Heart left ventricle (tissue), 16 donors: ENCODE measurements at regions of chr2 and their contacts with region 1.

Region 1: DNA sequence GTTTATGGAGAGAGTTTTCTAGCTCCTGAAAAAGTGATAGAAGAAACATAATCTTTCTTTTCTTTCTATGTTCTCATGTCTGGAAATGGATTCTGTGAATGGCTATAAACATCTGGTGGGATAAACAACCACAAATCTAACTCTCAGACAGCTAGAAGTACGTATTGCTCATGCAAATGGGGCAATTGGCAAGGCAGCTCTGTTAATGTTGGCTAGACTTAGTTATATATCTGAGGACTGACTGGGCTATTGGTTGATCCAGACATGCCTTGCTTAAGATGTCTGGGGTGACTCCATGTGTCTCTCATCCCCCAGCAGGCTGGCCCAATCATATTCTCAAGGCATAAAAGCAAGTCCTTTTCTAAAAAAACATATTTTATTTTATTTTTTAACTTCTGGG is 939.2 kb upstream of the NRXN1 start:
- DNase-seq: no peak
- ATAC-seq: no peak
- H3K4me3 ChIP-seq: no peak overlapping the region
- H3K27ac ChIP-seq: no peak overlapping the region
- H3K4me1 ChIP-seq: no peaks in the 10 kb centered on the region
- H3K27me3 ChIP-seq: no peaks in the 10 kb centered on the region
- CTCF ChIP-seq: no peak
- POLR2A ChIP-seq: no peak

Region 2: DNA sequence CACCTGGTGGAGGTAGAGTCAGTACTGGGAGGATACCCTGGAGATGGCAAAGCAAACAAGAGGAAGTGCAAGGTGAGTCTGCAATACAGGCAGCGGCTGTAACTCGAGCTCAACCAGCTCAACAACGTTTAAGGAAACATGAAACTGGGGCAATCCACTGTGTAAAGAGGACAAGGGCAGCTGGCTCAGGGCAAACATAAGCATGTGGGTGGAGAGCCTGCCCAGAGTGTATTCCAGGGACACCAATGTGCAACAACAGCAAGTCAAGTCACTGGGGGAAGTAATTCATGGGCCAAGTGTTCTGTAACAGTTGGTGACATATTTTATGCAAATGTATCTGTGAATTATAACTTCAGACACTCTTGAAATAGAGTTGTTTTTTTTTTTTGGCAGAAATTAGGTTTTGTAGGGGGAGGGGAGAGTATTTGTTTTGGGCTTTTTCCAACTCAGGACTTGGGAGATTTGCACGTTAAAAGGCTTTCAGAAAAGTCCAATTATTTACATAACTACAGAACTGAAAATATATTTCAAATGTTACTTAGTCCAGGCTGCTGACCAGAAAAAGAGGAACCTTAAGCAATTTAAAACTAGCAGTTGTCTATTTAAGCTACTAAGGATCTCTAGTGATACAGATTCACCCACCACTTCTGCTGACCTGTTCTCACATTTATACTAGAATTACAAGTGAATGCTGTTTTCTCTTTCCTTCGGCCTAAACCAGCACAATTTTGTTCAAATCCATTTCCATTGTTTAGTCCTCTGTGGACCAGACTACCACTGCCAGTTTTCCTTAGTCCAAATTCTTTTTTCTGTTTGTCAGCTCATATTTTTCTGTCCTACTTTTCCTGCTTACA is 957.8 kb before region 1 on chr2:
- intact Hi-C with region 1: loop called in 1 of 10 experiments (anchors 5 kb)
- DNase-seq: no peak
- ATAC-seq: peak in 1 of 4 donors; percentile 24
- H3K4me3 ChIP-seq: no peak overlapping the region
- H3K27ac ChIP-seq: no peak overlapping the region
- H3K4me1 ChIP-seq: peaks cover 0 to 11% (median 0%) of the 10 kb centered on the region in 12 donors
- H3K27me3 ChIP-seq: no peaks in the 10 kb centered on the region
- CTCF ChIP-seq: no peak
- POLR2A ChIP-seq: no peak

Region 3: GRCh38 chr2:51789918-51790317 is 181.2 kb before region 1 on chr2:
- intact Hi-C with region 1: no loop called
- DNase-seq: no peak
- ATAC-seq: no peak
- H3K4me3 ChIP-seq: no peak overlapping the region
- H3K27ac ChIP-seq: no peak overlapping the region
- H3K4me1 ChIP-seq: no peaks in the 10 kb centered on the region
- H3K27me3 ChIP-seq: no peaks in the 10 kb centered on the region
- CTCF ChIP-seq: no peak
- POLR2A ChIP-seq: no peak

Region 4: DNA sequence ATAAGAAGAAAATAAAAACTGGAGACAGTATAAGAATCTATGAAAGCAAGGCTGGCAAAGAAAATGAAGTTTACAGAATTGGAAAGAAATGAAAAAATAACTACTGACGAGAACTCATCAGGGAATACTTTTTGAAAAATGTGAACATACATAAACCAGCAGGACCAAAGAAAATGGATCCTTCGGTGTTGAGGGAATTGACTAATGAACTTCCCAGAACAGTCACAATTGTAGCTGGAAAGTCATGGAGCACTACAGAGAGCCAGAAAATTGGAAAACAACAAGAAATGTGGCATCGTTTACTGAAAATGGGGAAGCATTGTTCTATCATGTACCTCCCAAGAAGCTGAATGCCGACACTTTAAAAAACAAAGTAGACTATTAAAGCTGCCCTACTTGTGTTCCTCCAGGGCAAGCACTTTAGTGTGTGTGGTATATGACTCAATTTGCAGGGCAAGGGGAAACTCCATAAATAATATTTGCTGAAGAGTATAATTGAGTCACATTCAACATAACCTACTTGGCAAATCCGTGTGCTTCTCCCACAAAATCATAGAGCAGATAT is 282.4 kb after region 1 on chr2:
- intact Hi-C with region 1: no loop called
- DNase-seq: no peak
- ATAC-seq: no peak
- H3K4me3 ChIP-seq: no peak overlapping the region
- H3K27ac ChIP-seq: no peak overlapping the region
- H3K4me1 ChIP-seq: no peaks in the 10 kb centered on the region
- H3K27me3 ChIP-seq: no peaks in the 10 kb centered on the region
- CTCF ChIP-seq: no peak
- POLR2A ChIP-seq: no peak